H1 (cell line): ENCODE measurements at regions of chr1 and their contacts with region 1.

Region 1: GRCh38 chr1:204670152-204670927 is 15.2 kb downstream of the LRRN2 start:
- DNase-seq: no peak
- H3K4me3 ChIP-seq: no peak overlapping the region
- H3K27ac ChIP-seq: no peak overlapping the region
- H3K4me1 ChIP-seq: peaks cover 0 to 6% (median 3%) of the 10 kb centered on the region in 4 experiments; a peak in 3 of 7 replicates
- H3K27me3 ChIP-seq: no peaks in the 10 kb centered on the region; a peak in 2 of 7 replicates
- CTCF ChIP-seq: no peak
- EP300 ChIP-seq: no peak
- POLR2A ChIP-seq: no peak
- RAD21 ChIP-seq: no peak

Region 2: DNA sequence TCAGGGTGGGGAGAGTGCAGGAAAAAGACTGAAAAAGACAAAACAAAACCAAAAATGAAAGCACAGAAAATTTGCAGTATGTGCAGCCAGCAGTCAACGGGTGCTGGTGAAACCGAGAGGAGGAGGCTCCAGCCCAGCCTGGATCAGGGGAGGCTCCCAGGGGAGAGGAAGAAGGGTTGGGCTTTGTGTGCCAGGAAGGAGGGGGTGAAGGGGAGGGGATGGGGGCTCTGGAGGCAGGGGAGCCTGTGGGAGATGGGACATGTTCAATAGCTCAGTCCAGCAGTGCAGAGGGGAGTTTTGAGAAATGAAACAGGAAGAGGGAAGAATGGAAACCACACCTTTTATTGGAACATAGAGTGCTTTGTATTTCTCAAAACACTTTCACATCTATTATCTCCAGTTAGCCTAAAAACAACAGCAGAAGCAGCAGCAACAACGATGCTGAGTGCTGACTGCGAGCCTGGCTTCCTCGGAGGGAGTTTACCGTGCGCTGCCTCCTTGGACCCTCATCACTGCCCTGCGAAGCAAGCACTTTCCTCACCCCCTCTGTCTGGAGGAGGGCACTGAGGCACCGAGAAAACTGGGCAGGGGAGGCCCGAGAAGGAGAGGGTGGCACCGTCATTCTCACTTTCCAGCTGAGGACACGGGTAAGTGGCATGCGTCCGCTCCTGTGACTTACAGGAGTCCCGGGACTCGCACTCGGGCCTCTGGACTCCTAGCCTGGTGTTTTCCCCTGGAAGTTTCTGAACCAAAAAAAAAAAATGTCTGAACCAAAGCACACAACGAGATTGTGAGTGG is 91.3 kb before region 1 on chr1:
- CTCF ChIA-PET with region 1: no interaction called
- POLR2A ChIA-PET with region 1: no interaction called
- DNase-seq: no peak
- H3K4me3 ChIP-seq: peak overlapping the region in 1 of 4 experiments; percentile 3; a peak in 2 of 8 replicates
- H3K27ac ChIP-seq: no peak overlapping the region
- H3K4me1 ChIP-seq: peaks cover 18 to 40% (median 27%) of the 10 kb centered on the region in 4 experiments
- H3K27me3 ChIP-seq: peaks cover 0 to 12% (median 4%) of the 10 kb centered on the region in 4 experiments; a peak in 3 of 7 replicates
- CTCF ChIP-seq: no peak
- EP300 ChIP-seq: no peak
- POLR2A ChIP-seq: no peak
- RAD21 ChIP-seq: no peak

Region 3: GRCh38 chr1:204685236-204686006 is 15.1 kb after region 1 on chr1 and contains the start of gene LRRN2:
- CTCF ChIA-PET with region 1: interaction called, 19 read pairs
- POLR2A ChIA-PET with region 1: interaction called, 3 read pairs
- DNase-seq: peak in 1 of 2 experiments; percentile 66
- H3K4me3 ChIP-seq: peak within 1 kb of the TSS; percentile 43 to 66 (median 60)
- H3K27ac ChIP-seq: no peak within 1 kb of the TSS
- H3K4me1 ChIP-seq: peaks cover 0 to 12% (median 7%) of the 10 kb centered on the region in 4 experiments; a peak in 6 of 7 replicates
- H3K27me3 ChIP-seq: peaks cover 13 to 50% (median 44%) of the 10 kb centered on the region in 4 experiments
- CTCF ChIP-seq: no peak; a peak in 1 of 4 replicates
- EP300 ChIP-seq: no peak
- POLR2A ChIP-seq: no peak
- RAD21 ChIP-seq: no peak
- total RNA-seq, gene LRRN2: 2.3 and 2.5 TPM in 2 replicates